Adrenal gland (tissue), 19 donors: ENCODE measurements at regions of chr2 and their contacts with region 1.

Region 1: GRCh38 chr2:235135990-235136561 is 184.3 kb downstream of the SH3BP4 start:
- DNase-seq: peak; percentile 78 to 94 (median 86)
- H3K4me3 ChIP-seq: peak overlapping the region in 1 of 4 donors; percentile 25
- H3K27ac ChIP-seq: no peak overlapping the region
- H3K4me1 ChIP-seq: no peaks in the 10 kb centered on the region
- H3K27me3 ChIP-seq: no peaks in the 10 kb centered on the region
- CTCF ChIP-seq: peak; percentile 69 to 88 (median 83)
- POLR2A ChIP-seq: no peak

Region 2: GRCh38 chr2:235433860-235434259 is 297.8 kb after region 1 on chr2:
- intact Hi-C with region 1: loop called in 1 of 2 experiments (anchors 10 kb)
- DNase-seq: peak; percentile 88 to 97 (median 93)
- H3K4me3 ChIP-seq: no peak overlapping the region
- H3K27ac ChIP-seq: peak overlapping the region; percentile 1 to 89 (median 73)
- H3K4me1 ChIP-seq: peaks cover 13 to 22% of the 10 kb centered on the region in 2 donors
- H3K27me3 ChIP-seq: no peaks in the 10 kb centered on the region
- CTCF ChIP-seq: peak in 3 of 6 experiments; percentile 21 to 32 (median 22)
- POLR2A ChIP-seq: peak in 1 of 2 donors; percentile 76

Region 3: DNA sequence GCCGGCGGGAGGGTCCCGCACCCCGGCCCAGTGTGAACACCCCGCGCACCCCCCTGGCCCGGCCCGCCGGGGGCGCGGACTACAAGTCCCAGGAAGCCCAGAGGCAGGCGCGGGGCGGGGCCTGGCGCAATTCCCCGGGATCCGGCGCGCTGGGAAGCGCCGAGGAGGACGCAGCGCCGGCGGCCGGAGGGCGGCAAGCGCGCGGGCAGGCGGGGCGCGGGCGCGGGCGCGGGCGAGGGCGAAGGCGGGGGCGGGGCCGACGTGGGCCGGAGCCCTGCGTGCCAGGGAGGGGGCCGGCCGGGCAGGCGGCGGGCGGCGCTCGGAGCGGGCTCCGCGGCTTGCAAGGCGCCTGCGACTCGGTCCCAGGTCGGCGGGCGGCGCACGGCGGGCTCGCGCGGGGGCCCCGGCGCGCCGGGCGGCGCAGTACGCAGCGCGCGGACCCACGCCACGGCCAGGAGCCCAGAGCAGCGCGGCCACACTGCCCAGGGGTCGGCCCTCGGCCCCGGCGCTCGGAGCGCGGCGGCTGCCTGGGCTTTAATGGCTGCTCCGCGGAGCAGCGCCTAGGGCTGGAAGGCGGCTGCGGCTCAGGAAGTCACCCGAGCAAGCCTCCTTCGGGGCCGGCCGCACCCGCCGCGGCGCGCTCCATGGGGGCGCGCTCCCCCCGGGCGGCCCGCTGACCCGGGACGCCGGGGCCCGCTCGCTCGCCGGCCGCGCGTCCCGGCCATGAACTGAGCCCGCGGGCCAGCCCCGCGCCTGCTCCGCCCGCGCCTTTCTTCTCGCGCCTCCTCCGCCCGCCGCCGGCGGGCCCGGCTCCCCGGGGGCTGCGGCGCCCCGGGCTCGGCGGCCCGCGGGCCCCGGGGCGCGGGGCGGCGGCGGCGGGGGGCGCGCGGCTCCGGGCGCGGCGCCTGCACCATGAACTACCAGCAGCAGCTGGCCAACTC is 358.0 kb after region 1 on chr2 and contains the start of gene AGAP1:
- intact Hi-C with region 1: loop called (anchors 10 kb)
- DNase-seq: peak; percentile 87 to 93 (median 91)
- H3K4me3 ChIP-seq: peak within 1 kb of the TSS; percentile 31 to 96 (median 60)
- H3K27ac ChIP-seq: peak within 1 kb of the TSS in 3 of 5 donors; percentile 72 to 90 (median 80)
- H3K4me1 ChIP-seq: peaks cover 12 to 19% of the 10 kb centered on the region in 2 donors
- H3K27me3 ChIP-seq: no peaks in the 10 kb centered on the region
- CTCF ChIP-seq: no peak
- POLR2A ChIP-seq: peak; percentile 35 to 41
- total RNA-seq, gene AGAP1: 10.1 to 29.6 (median 18.4) TPM

Region 4: GRCh38 chr2:235595422-235596010 is 459.4 kb after region 1 on chr2:
- intact Hi-C with region 1: loop called (anchors 2 to 5 kb)
- DNase-seq: peak; percentile 53 to 91 (median 75)
- H3K4me3 ChIP-seq: no peak overlapping the region
- H3K27ac ChIP-seq: no peak overlapping the region
- H3K4me1 ChIP-seq: no peaks in the 10 kb centered on the region
- H3K27me3 ChIP-seq: no peaks in the 10 kb centered on the region
- CTCF ChIP-seq: peak; percentile 67 to 92 (median 89)
- POLR2A ChIP-seq: no peak

Region 5: GRCh38 chr2:235746257-235747084 is 610.4 kb after region 1 on chr2:
- intact Hi-C with region 1: loop called (anchors 2 to 5 kb)
- DNase-seq: peak; percentile 64 to 88 (median 75)
- H3K4me3 ChIP-seq: no peak overlapping the region
- H3K27ac ChIP-seq: no peak overlapping the region
- H3K4me1 ChIP-seq: no peaks in the 10 kb centered on the region
- H3K27me3 ChIP-seq: no peaks in the 10 kb centered on the region
- CTCF ChIP-seq: peak; percentile 65 to 93 (median 84)
- POLR2A ChIP-seq: no peak